ENCODE measurements at regions of chr14 and their contacts with region 1.

Region 1: GRCh38 chr14:52923902-52924575 is 26.8 kb downstream of the FERMT2 start:
- DNase-seq: peak in 1 of 2 experiments; percentile 32
- H3K4me3 ChIP-seq: no peak overlapping the region
- H3K4me3 Mint-ChIP-seq: no peak overlapping the region
- H3K27ac Mint-ChIP-seq: no peak overlapping the region
- H3K4me1 ChIP-seq: peaks cover 22% of the 10 kb centered on the region
- H3K4me1 Mint-ChIP-seq: peaks cover 15% of the 10 kb centered on the region
- H3K27me3 ChIP-seq: no peaks in the 10 kb centered on the region
- H3K27me3 Mint-ChIP-seq: no peaks in the 10 kb centered on the region
- CTCF ChIP-seq: peak; percentile 12 to 45

Region 2: DNA sequence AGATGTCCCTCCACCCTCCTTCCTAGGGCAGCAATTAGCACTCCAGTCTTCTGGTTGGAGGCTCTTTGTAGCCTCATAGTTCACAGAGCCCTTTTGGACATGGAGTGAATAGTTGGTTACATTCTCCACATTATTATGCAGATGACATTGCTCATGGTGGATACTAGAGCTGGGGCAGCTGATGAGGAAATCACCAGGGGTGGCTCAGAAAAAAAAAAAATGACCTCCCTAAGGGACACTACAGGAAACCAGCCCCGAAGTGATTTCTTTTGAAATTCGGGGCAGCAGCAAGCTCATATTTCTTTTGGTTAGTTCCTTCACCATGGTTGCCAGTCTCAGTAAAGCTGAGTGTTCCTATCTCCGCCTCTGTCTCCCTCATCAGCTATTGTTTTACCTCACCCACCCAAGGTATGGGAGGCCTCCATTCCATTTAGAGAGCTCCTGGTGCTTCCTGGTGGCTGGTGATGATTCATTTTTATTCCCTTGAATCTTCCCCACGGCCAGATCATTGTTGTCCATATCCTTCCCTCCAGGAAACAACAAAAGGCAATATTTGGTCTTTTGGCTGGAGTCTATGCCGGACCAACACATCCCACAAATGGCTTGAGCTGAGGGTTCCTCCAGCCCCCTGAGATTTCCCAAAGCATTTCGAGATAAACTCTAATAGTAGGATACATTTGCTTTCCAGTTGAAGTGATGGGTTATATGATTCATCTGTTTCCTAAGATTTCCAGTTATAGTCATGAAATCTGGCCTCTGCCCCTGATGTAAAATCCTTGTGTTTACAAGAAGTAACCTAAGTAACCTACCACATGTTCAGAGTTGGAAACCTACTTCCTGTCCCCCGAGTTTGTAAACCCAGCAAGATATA is 799.0 kb before region 1 on chr14:
- CTCF ChIA-PET with region 1: no interaction called
- POLR2A ChIA-PET with region 1: no interaction called
- intact Hi-C with region 1: no loop called
- DNase-seq: no peak
- H3K4me3 ChIP-seq: no peak overlapping the region
- H3K4me3 Mint-ChIP-seq: no peak overlapping the region
- H3K27ac Mint-ChIP-seq: no peak overlapping the region
- H3K4me1 ChIP-seq: peaks cover 6% of the 10 kb centered on the region; the same call in 1 of the 2 replicates
- H3K4me1 Mint-ChIP-seq: peaks cover 7% of the 10 kb centered on the region
- H3K27me3 ChIP-seq: no peaks in the 10 kb centered on the region
- H3K27me3 Mint-ChIP-seq: no peaks in the 10 kb centered on the region
- CTCF ChIP-seq: no peak

Region 3: GRCh38 chr14:52961060-52961639 is 37.1 kb after region 1 on chr14:
- CTCF ChIA-PET with region 1: interaction called, 5 read pairs
- POLR2A ChIA-PET with region 1: no interaction called
- intact Hi-C with region 1: loop called (anchors 1 kb)
- DNase-seq: peak; percentile 67
- H3K4me3 ChIP-seq: no peak overlapping the region
- H3K4me3 Mint-ChIP-seq: no peak overlapping the region
- H3K27ac Mint-ChIP-seq: no peak overlapping the region
- H3K4me1 ChIP-seq: no peaks in the 10 kb centered on the region
- H3K4me1 Mint-ChIP-seq: peaks cover 11% of the 10 kb centered on the region
- H3K27me3 ChIP-seq: no peaks in the 10 kb centered on the region
- H3K27me3 Mint-ChIP-seq: peaks cover 2% of the 10 kb centered on the region
- CTCF ChIP-seq: peak; percentile 74

Region 4: DNA sequence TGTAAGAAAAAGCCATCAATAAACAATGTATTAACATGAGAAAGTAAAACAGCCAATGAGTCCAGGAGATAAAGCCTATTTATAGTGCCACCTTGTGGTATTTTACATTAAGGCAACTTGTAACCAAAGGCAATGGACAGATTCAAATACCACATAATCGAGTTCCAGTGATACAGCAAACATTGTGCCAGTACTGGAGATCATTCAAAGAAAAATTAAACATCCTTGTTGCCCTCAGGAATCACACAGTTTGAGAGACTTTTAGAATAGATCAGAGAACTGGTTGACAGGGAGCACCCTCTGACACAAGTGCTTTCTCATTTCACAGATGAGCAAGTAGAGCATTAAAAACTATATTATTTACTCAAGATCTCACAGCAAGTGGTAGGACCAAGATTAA is 131.0 kb after region 1 on chr14:
- CTCF ChIA-PET with region 1: no interaction called
- POLR2A ChIA-PET with region 1: no interaction called
- intact Hi-C with region 1: loop called (anchors 1 kb)
- DNase-seq: peak in 1 of 2 experiments; percentile 32
- H3K4me3 ChIP-seq: no peak overlapping the region
- H3K4me3 Mint-ChIP-seq: no peak overlapping the region
- H3K27ac Mint-ChIP-seq: no peak overlapping the region
- H3K4me1 ChIP-seq: no peaks in the 10 kb centered on the region
- H3K4me1 Mint-ChIP-seq: no peaks in the 10 kb centered on the region
- H3K27me3 ChIP-seq: no peaks in the 10 kb centered on the region
- H3K27me3 Mint-ChIP-seq: no peaks in the 10 kb centered on the region
- CTCF ChIP-seq: peak; percentile 62 to 63